Ascending aorta (tissue), 2 donors: ENCODE measurements at regions of chrX and their contacts with region 1.

Region 1: GRCh38 chrX:64205735-64206491 is 405 bp upstream of the AMER1 start:
- DNase-seq: peak; percentile 85 to 96
- H3K4me3 ChIP-seq: peak overlapping the region; percentile 65 to 90
- H3K27ac ChIP-seq: peak overlapping the region; percentile 87 to 90
- H3K4me1 ChIP-seq: peaks cover 0 to 7% of the 10 kb centered on the region in 2 donors
- H3K27me3 ChIP-seq: no peaks in the 10 kb centered on the region
- CTCF ChIP-seq: peak; percentile 8 to 33 (median 14)

Region 2: GRCh38 chrX:63350941-63351616 is 854.8 kb before region 1 on chrX and contains the start of gene SPIN4:
- intact Hi-C with region 1: loop called (anchors 5 kb)
- DNase-seq: peak; percentile 39 to 91
- H3K4me3 ChIP-seq: peak within 1 kb of the TSS; percentile 66 to 68
- H3K27ac ChIP-seq: peak within 1 kb of the TSS; percentile 70 to 72
- H3K4me1 ChIP-seq: no peaks in the 10 kb centered on the region
- H3K27me3 ChIP-seq: no peaks in the 10 kb centered on the region
- CTCF ChIP-seq: no peak
- total RNA-seq, gene SPIN4: 9.2 TPM

Region 3: DNA sequence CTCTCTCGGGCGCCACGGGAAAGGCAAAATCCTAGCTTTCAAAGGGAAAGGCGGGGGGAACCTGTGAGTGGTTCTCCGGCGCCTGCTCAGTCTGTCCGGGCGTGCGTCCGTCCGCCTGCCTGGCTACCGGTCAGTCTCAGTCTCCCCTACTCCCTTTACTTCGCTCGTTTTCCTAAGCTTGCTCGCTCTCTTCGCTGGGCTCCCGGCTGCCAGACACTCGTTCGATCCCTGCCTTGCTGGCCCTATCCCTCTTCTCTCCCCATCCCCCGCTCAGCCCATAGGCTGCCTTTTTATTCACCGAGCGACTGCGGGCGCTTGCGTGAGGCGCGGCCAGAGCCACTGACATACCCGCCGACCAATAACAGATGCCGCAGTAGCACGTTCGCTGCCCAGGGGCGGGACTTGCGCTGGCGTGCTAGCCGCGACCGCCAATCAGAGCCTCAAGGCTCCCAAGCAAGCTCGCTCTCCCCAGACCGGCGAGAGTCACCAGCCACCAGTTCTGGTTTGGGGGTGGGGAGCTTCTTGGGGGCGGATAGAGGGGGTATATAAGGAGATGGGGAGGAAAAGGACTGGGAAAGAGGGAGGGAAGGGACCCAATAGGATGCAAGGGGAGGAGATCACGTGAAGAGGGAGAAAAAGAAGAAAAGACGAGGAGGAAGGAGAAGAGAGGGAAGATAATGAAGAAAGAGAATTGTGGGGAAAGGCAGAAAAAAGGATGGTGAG is 450.9 kb before region 1 on chrX:
- intact Hi-C with region 1: loop called (anchors 2 kb)
- DNase-seq: peak; percentile 89 to 96
- H3K4me3 ChIP-seq: peak overlapping the region; percentile 61 to 71
- H3K27ac ChIP-seq: peak overlapping the region; percentile 89 to 91
- H3K4me1 ChIP-seq: no peaks in the 10 kb centered on the region
- H3K27me3 ChIP-seq: no peaks in the 10 kb centered on the region
- CTCF ChIP-seq: no peak

Region 4: DNA sequence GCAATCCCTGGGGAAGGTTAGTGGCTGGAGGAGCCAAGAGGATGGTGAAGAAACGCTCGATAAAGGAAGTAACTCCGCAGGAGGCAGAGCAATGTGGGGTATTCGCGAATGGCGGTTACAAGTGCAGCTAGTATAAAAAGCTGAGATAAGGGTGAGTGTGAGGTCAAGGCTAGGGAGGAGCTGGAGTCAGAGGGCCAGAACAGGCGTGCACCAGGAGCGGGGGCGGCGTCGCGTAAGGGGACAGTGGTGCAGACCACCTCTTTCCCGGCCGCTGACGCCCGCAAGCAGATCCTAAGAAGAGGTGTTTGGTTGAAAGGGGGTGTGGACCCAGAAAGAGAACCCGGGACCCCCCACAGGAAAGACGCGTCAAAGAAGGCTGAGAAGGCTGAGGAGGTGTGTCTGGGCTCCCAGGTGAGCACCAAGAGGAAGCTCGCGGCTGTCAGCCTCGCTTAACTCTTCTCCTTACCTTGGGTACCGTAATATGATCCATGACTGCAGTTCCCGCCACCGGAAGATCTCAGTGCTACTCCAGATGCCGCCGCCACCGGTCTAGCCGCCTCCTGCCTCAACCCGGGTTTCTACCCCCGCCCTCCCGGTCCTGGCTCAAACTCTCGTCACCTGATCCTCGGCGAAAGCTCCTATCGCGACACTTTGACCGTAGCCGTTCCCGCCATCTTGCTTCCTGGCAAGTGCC is 189.1 kb after region 1 on chrX and contains the start of gene MTMR8:
- intact Hi-C with region 1: loop called (anchors 10 kb)
- DNase-seq: peak; percentile 21 to 85
- H3K4me3 ChIP-seq: peak within 1 kb of the TSS; percentile 65 to 79
- H3K27ac ChIP-seq: peak within 1 kb of the TSS; percentile 48 to 75
- H3K4me1 ChIP-seq: peaks cover 0 to 3% of the 10 kb centered on the region in 2 donors
- H3K27me3 ChIP-seq: no peaks in the 10 kb centered on the region
- CTCF ChIP-seq: no peak
- total RNA-seq, gene MTMR8: 0.85 TPM

Region 5: DNA sequence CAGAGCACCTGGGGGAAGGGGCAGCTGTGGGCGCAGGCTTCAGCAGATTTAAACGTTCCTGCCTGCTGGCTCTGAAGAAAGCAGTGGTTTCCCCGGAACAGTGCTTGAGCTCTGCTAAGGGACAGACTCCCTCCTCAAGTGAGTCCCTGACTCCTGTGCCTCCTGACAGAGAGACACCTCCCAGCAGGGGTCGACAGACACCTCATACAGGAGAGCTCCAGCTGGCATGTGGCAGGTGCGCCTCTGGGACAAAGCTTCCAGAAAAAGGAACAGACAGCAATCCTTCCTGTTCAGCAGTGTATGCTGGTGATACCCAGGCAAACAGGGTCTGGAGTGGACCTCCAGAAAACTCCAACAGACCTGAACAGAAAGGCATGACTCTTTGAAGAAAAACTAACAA is 702.2 kb after region 1 on chrX:
- intact Hi-C with region 1: no loop called
- DNase-seq: no peak
- H3K4me3 ChIP-seq: no peak overlapping the region
- H3K27ac ChIP-seq: no peak overlapping the region
- H3K4me1 ChIP-seq: no peaks in the 10 kb centered on the region
- H3K27me3 ChIP-seq: no peaks in the 10 kb centered on the region
- CTCF ChIP-seq: no peak

Region 6: GRCh38 chrX:65534450-65535292 is 1328.8 kb after region 1 on chrX and contains the start of gene LAS1L:
- intact Hi-C with region 1: loop called (anchors 10 kb)
- DNase-seq: peak; percentile 76 to 95
- H3K4me3 ChIP-seq: peak within 1 kb of the TSS; percentile 58 to 74
- H3K27ac ChIP-seq: peak within 1 kb of the TSS; percentile 58 to 60
- H3K4me1 ChIP-seq: peaks cover 3 to 7% of the 10 kb centered on the region in 2 donors
- H3K27me3 ChIP-seq: no peaks in the 10 kb centered on the region
- CTCF ChIP-seq: no peak
- total RNA-seq, gene LAS1L: 8.8 TPM